MCF 10A (cell line): ENCODE measurements at regions of chr20 and their contacts with region 1.

Region 1: DNA sequence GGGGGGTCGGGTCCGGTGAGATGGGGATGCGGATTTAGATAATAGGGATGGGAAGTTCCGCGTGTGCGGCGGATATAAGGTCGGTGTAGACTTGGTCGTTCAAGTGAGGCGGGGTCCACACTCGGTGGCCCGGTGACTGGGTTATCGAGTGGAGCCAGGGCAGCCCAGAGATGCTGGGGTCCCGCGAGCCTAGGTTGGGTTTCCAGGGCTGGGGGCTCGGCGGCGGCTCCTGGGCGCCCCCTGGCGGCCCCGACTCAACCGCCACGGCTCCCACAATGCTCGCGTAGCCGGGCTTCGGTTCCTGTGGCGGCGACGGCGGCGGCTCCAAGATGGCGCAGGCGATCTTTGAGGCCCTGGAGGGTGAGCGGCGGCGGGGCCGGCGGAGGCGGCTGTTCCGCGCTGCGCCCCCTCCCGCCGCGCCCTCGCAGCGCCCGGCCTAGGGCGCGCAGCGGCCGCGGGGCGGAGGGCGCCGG is at the start of gene ZNF341:
- DNase-seq: peak; percentile 79
- H3K4me3 Mint-ChIP-seq: peak within 1 kb of the TSS; percentile 86
- H3K27ac Mint-ChIP-seq: peak within 1 kb of the TSS; percentile 91
- H3K4me1 Mint-ChIP-seq: peaks cover 20% of the 10 kb centered on the region
- H3K27me3 Mint-ChIP-seq: no peaks in the 10 kb centered on the region
- CTCF ChIP-seq: peak; percentile 82
- total RNA-seq, gene ZNF341: 2.0 and 2.5 TPM in 2 replicates

Region 2: DNA sequence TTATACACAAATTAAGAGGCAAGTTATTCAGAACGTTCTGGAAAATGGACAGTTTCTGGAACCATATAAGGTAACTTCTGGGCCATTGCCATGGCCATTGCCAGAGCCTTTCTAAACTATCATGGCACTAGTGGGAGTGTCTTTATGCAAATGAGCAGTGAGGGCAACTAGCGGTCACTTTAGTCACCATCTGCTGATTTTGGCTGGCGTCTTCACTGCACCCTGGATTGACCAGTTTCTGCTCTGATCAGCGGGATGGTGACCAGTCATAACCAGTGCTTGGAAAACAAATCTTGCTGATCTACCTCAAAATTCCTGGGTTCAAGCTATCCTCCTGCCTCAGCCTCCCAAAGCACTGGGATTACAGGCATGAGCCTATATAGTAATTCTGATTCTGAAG is 280.9 kb before region 1 on chr20:
- CTCF ChIA-PET with region 1: no interaction called
- POLR2A ChIA-PET with region 1: no interaction called
- intact Hi-C with region 1: loop called (anchors 10 kb)
- DNase-seq: peak; percentile 60
- H3K4me3 Mint-ChIP-seq: no peak overlapping the region
- H3K27ac Mint-ChIP-seq: no peak overlapping the region
- H3K4me1 Mint-ChIP-seq: peaks cover 6% of the 10 kb centered on the region
- H3K27me3 Mint-ChIP-seq: no peaks in the 10 kb centered on the region
- CTCF ChIP-seq: no peak

Region 3: DNA sequence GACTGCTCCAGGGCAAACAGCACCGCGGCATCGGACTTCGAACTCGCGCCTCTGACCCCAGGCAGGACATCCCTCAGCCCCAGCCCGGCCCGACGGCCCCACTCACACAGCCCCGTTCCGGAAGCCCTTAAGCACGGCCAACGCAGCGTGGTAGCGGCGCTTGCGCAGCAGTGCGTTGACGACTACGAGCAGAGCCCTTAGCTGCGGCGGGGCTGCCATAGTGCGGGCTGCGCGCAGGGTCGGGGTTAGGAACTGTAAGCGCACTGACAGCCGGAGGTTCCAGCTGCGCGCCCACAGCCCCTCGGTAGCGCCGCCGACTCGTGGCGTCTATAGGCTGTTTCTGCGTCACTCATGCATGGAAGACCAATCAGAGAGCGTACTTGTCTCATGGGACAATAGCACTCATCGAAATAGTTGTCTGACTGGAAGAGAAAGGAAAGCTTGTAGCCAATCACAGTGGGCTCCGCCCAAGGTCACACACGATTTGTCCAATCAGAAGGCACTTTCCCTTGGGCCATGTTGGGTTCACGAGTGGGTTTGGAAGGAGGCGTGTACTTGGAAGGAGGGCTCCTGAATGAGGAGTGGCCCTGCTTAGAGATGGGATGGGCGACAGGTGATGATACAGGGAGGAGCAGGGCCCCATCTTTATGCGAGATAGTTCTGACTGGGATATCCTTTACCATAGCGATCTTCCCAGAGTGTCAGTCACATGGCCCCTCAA is 11.6 kb before region 1 on chr20 and contains the start of gene PXMP4:
- CTCF ChIA-PET with region 1: interaction called, 3 read pairs
- POLR2A ChIA-PET with region 1: interaction called, 37 read pairs
- intact Hi-C with region 1: no loop called
- DNase-seq: peak; percentile 98
- H3K4me3 Mint-ChIP-seq: peak within 1 kb of the TSS; percentile 67
- H3K27ac Mint-ChIP-seq: peak within 1 kb of the TSS; percentile 0
- H3K4me1 Mint-ChIP-seq: peaks cover 9% of the 10 kb centered on the region
- H3K27me3 Mint-ChIP-seq: no peaks in the 10 kb centered on the region
- CTCF ChIP-seq: no peak
- total RNA-seq, gene PXMP4: 3.9 and 5.2 TPM in 2 replicates

Region 4: GRCh38 chr20:33761698-33762250 is 30.0 kb after region 1 on chr20:
- CTCF ChIA-PET with region 1: no interaction called
- POLR2A ChIA-PET with region 1: no interaction called
- intact Hi-C with region 1: no loop called
- DNase-seq: no peak
- H3K4me3 Mint-ChIP-seq: no peak overlapping the region
- H3K27ac Mint-ChIP-seq: no peak overlapping the region
- H3K4me1 Mint-ChIP-seq: no peaks in the 10 kb centered on the region
- H3K27me3 Mint-ChIP-seq: no peaks in the 10 kb centered on the region
- CTCF ChIP-seq: no peak